Mammary epithelial cell (primary cell): ENCODE measurements at regions of chr2 and their contacts with region 1.

Region 1: DNA sequence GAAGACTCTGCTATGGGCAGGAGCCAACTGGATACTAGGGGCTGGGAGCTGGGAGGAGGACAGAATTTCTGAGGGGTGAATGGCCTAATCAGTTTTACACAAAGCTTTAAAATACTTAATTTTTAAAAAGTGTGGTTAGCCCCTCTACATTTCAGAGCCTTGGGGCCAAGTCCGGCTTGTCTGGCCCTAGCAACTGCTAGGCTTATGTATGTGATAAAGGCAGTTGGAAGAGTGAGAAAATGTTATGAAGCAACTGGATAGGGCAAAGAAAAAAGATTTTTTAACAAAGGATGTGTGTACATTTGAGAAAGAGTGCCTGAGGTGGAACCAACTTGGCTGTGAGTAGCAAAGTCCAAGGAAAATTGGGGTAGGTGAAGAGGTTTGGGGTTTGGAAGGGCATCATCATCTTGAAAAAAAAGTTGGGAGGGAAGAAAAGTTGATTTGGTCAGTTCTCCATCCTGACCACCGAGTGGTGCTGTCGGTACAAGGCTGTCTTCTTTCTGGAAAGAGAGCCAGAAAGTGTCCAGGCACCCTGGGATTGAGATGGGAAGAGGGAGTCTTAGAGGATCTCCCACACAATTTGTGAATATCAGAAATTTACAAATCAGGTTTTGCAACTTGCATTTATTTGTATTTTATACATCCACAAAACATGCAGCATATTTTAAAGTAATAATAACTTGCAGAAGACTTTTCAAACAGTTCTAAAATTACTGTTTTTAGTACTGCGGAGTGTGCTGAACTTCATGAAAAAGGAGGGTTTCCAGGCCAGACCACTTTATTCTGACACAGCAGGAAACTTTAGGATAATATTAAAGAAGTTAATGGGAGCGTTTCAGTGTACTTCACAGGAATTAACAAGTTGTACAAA is 10.5 kb upstream of the CDK15 start:
- DNase-seq: peak; percentile 55
- H3K4me3 ChIP-seq: no peak overlapping the region
- H3K27ac ChIP-seq: peak overlapping the region; percentile 3
- H3K4me1 ChIP-seq: peaks cover 34% of the 10 kb centered on the region
- H3K27me3 ChIP-seq: no peaks in the 10 kb centered on the region
- CTCF ChIP-seq: peak; percentile 86 to 88

Region 2: DNA sequence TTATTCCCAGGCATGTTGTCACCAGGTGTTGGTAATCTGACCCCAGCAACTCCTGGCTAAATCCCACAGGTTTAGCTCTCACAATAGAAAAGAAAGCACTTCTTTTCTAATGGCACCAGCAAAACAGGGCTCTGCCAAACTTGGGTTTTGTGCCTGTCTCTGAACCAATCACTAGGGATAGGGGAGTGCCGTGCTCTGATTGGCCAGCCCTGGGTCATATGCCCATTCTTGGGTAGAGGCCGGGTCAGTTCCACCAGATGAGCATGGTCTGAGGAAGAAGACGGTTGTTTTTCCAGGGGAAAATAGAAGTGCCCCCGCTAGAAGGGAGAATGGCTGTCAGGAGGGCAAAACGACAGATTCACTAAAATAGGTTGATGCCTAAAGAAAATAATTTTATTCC is 25.2 kb after region 1 on chr2:
- CTCF ChIA-PET with region 1: no interaction called
- dilution Hi-C with region 1: no loop called
- in situ Hi-C with region 1: no loop called
- intact Hi-C with region 1: no loop called
- DNase-seq: no peak
- H3K4me3 ChIP-seq: no peak overlapping the region
- H3K27ac ChIP-seq: no peak overlapping the region
- H3K4me1 ChIP-seq: peaks cover 5% of the 10 kb centered on the region
- H3K27me3 ChIP-seq: no peaks in the 10 kb centered on the region
- CTCF ChIP-seq: no peak

Region 3: DNA sequence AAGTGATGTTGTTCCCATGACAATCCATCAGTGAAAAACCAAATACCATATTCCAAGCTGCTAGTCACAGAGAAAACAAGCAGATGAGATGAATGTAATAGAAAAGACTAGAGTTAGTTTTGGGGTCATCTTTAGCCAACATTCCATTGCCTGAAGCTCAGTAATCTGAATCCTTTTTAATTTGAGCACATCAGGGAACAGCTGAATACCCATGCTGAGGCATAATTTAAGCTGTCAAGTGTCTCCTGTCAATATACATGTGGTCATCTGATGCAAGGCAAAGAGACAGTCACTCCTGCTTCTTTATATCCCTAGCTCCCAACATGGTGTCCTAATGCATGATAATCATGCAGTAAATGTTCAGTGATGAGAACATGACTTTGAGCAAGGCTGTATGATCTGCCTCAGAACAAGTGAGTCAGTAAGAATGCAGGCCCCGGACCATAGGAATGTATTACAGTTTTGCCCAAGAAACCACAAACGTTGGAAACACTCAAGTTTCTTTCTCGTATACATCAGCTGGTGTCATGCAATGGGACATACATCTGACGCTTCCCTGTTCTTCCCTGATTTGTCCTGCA is 58.5 kb after region 1 on chr2:
- CTCF ChIA-PET with region 1: no interaction called
- dilution Hi-C with region 1: no loop called
- in situ Hi-C with region 1: loop called in 1 of 2 experiments (anchors 10 kb)
- intact Hi-C with region 1: loop called (anchors 1 kb)
- DNase-seq: peak; percentile 98
- H3K4me3 ChIP-seq: peak overlapping the region; percentile 2 to 37 (median 10)
- H3K27ac ChIP-seq: peak overlapping the region; percentile 97
- H3K4me1 ChIP-seq: peaks cover 43% of the 10 kb centered on the region
- H3K27me3 ChIP-seq: no peaks in the 10 kb centered on the region
- CTCF ChIP-seq: no peak

Region 4: DNA sequence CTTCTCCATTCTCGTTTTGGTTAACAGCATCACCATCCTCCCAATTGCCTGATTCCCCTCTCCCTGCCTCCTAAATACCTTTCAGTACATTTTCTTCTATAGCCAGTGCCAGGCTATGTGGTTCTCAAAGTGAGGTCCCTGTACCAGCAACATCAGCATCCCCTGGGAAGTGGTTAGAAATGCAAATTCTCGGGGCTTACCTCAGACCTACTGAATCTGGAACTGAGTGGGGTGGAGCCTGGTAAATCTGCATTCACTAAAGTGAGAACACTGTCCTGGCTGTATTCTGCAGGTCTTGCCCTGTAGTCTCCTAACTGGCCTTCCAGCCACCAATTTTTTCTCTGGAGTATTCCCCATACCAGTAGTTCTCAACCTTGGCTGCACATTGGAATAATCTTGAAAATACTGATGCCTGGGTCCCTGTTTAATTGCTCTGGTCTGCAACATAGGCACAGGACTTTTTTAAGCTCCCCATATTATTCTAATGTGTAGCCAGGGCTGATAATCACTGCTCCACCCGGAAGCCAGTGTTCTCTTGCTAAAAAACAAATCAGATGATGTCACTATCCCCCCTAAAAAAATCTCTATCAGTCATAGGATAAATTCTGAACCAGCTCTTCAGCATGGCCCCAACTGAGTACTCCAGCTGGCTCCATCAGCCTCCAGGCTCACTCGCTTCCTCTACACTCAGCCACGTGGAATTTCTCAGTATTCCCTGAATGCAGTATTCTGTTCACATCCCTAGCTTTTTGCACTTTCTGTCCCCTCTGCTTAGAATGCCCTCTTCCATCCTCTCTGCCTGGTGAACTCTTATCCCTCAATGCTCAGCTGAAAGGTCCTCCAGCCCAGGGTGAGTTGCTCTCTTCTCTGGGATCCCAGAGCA is 108.9 kb after region 1 on chr2:
- CTCF ChIA-PET with region 1: no interaction called
- dilution Hi-C with region 1: no loop called
- in situ Hi-C with region 1: no loop called
- intact Hi-C with region 1: no loop called
- DNase-seq: no peak
- H3K4me3 ChIP-seq: no peak overlapping the region
- H3K27ac ChIP-seq: no peak overlapping the region
- H3K4me1 ChIP-seq: peaks cover 9% of the 10 kb centered on the region
- H3K27me3 ChIP-seq: no peaks in the 10 kb centered on the region
- CTCF ChIP-seq: no peak

Region 5: GRCh38 chr2:202033321-202034248 is 237.7 kb after region 1 on chr2 and contains the start of gene FZD7:
- CTCF ChIA-PET with region 1: no interaction called
- dilution Hi-C with region 1: no loop called
- in situ Hi-C with region 1: loop called in 1 of 2 experiments (anchors 10 kb)
- intact Hi-C with region 1: loop called (anchors 1 kb)
- DNase-seq: peak; percentile 90
- H3K4me3 ChIP-seq: peak within 1 kb of the TSS; percentile 63 to 79 (median 71)
- H3K27ac ChIP-seq: peak within 1 kb of the TSS; percentile 80
- H3K4me1 ChIP-seq: peaks cover 32% of the 10 kb centered on the region
- H3K27me3 ChIP-seq: no peaks in the 10 kb centered on the region
- CTCF ChIP-seq: peak in 1 of 2 donors; percentile 37
- total RNA-seq, gene FZD7: 21.6 to 66.5 TPM

Region 6: DNA sequence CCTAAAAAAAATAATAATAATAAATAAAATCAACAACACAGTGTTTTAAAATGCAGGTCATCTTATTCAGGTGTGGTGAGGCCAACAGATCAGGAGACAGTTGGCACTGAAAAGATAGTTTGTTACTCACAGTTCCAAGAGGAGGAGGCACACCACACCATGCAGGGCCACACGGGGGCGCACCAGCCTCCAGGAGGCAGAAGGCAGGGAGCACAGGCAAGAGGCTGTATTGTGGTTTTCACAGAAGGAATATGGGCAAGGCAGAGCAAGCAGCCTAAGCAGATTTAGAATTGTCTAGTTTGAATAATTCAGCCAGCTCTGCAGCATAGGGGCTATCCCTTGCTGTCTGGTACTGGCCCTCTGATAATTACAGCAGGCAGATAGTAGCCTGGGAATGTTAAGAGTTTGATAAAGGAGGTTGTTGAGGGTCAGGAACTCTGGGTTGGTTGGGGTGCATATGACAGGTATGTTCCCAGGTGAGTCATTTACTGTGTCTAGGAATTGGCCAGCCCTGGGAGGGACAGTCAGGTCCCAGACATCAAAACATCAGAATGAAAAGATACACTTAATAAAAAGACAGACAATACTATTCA is 308.5 kb after region 1 on chr2:
- CTCF ChIA-PET with region 1: interaction called, 4 read pairs
- dilution Hi-C with region 1: no loop called
- in situ Hi-C with region 1: no loop called
- intact Hi-C with region 1: loop called (anchors 2 kb)
- DNase-seq: peak; percentile 57
- H3K4me3 ChIP-seq: no peak overlapping the region
- H3K27ac ChIP-seq: no peak overlapping the region
- H3K4me1 ChIP-seq: no peaks in the 10 kb centered on the region
- H3K27me3 ChIP-seq: no peaks in the 10 kb centered on the region
- CTCF ChIP-seq: peak; percentile 76 to 79

Region 7: DNA sequence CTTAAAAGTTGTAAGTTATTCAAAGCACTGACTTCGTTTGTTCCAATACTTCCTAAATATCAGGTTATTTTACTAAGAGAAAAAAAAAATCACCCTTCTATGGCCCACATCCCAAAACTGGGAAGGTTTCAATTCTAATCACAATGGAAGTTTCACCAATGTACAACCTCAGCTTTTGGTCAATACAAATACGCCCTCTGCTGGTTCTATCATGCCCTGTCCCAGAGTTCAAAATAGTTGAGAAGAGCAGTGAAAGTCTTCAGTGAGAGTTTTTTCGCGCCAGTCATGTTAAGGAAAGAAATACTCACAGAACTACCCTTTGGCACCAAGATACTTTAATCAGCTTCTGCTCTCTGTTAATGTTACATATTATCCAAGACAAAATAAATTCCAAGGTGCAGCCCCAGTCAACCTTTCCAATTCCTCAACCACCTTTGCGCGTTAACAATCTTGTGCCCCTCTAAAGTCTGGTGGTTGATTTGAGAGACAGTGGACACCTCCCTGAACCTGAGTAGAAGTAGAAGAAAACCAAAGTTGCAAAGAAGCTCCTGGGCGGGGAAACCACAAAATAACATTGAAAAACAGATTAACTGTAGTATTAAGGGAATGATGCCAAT is 382.6 kb after region 1 on chr2:
- CTCF ChIA-PET with region 1: interaction called, 3 read pairs
- dilution Hi-C with region 1: no loop called
- in situ Hi-C with region 1: loop called in 1 of 2 experiments (anchors 5 kb)
- intact Hi-C with region 1: loop called (anchors 1 kb)
- DNase-seq: peak; percentile 46
- H3K4me3 ChIP-seq: no peak overlapping the region
- H3K27ac ChIP-seq: no peak overlapping the region
- H3K4me1 ChIP-seq: no peaks in the 10 kb centered on the region
- H3K27me3 ChIP-seq: no peaks in the 10 kb centered on the region
- CTCF ChIP-seq: peak; percentile 76 to 85